Sciatic nerve (tissue), 2 donors: ENCODE measurements at regions of chr1 and their contacts with region 1.

Region 1: DNA sequence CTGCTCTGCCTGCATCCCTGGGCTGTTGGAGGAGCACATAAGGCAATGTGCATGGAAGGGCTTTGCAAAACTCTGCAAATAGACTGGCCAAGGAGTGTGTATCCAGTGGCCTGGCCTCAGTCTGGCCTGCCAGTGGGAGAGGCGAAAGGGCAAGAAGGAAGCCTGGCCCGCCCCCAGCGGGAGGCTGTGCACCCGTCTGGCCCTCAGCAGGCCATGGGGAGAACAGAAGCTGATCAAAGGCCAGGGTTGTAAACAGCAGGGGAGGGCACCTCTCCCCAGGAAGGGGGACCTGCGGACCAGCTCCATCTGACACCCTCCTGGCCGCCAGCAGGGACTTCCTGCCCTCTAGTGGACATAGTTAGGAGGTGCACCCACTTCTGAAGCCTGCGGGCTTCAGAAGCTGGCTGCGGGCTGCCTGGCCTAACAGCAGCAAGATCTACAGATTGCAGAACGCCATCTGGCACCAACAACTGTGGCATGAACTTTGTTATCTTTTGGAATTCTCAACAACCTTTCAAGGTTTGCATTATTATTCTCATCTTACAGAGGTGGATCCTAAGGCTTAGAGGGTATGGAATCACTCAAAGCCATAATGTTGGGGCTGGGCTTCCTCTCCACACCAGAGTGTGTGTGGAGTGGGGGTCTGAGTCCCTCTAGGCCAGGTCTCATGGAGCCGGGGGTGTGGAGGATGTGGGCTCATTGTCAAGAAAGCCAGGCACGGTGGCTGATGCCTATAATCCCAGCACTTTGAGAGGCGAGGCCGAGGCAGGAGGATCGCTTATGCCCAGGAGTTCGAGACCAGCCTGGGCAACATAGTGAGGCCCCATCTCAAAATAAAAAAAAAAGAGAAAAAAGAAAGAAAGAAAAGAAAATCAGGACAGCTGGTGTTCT is 18.9 kb upstream of the CDK18 start:
- DNase-seq: no peak
- ATAC-seq: peak; percentile 86

Region 2: DNA sequence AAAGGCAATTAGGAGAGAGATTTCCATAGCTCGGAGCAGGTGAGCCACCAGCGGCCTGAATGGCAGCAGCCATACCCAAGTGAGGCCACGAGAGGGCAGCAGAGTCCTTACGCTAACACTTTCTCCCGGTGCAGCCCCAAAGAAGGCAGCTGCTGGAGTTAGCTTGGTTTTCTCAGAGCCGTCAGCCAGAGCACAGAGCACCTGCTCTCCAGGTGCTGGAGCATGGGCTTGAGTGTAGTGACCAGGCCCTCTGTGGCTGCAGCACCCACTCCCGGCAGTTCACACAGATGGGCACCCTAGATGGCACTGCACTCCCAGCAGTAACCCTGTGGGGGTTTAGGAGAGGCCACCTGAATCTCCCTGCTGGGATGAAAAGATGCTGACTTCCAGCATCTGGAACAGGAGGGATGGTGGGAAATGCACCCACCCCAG is 212.0 kb before region 1 on chr1:
- intact Hi-C with region 1: loop called (anchors 10 kb)
- DNase-seq: peak; percentile 94
- ATAC-seq: peak; percentile 85

Region 3: DNA sequence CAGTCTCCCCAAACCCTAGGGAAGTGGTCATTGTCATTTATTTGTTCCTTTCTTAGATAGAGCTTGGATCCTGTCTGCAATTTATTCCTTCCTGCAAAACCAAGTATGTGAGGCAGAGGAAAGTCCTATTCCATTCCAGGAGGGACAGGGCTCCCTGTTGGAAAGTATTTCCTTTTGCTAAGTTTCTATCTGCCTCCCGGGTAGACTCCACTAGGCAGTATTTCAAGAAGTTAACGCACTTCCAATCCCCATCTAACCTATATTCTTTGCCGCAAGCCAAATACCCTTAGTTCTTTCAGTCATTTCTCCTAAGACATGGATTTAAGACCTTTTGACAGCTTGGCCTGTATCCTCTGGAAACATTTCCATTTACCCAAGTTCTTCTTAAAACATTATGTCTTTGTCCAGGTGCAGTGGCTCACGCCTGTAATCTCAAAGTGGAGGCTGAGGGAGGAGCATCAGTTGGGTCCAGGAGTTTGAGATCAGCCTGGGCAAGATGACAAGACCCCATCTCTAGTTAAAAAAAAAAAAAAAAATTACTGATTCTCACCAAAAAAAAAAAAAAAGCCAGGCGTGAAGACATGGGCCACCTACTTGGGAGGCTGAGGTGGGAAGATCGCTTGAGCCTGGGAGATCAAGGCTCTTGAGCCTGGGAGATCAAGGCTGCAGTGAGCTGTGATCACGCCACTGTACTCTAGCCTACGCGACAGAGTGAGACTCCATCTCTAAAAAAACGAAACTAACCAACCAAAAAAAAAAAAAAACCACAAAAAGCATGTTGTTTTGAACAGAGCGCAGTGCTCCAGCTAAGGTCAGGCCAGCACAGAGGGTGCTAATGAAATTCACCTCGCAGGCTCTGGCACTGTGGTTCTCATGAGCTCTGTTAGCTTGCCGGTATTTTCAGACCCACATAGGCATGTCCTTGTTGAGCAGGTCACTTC is 200.2 kb before region 1 on chr1:
- intact Hi-C with region 1: no loop called
- DNase-seq: no peak
- ATAC-seq: peak; percentile 65

Region 4: DNA sequence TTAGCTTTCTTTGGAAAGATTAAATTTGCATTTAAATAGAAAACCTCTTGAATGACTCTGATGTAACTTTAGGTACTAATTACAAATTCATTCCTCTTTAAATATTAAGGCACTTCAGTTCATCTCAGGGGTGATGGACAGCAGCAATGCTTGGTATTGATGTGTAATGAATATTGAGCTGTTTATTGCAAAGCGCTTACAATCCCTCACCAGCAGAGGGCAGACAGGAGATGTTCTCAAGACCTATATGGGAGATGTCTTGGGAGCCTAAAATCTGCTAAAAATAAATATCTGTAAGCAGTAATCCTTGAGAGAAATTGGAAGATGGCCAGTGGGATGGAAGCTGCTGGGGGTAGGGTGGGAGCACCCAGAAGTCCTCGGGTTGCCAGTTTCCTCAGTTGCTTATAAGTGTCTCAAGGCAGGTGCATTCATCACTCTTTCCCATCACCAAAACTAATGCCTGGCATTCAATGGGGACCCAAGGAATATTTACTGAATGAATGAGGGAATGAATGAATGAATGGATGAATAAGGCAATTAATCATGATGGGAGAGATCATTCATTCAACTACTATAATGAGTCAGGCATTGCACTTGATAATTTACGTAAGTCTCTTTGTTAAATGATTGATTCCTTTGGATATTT is 131.2 kb before region 1 on chr1:
- intact Hi-C with region 1: loop called (anchors 5 kb)
- DNase-seq: peak; percentile 72
- ATAC-seq: peak; percentile 69

Region 5: DNA sequence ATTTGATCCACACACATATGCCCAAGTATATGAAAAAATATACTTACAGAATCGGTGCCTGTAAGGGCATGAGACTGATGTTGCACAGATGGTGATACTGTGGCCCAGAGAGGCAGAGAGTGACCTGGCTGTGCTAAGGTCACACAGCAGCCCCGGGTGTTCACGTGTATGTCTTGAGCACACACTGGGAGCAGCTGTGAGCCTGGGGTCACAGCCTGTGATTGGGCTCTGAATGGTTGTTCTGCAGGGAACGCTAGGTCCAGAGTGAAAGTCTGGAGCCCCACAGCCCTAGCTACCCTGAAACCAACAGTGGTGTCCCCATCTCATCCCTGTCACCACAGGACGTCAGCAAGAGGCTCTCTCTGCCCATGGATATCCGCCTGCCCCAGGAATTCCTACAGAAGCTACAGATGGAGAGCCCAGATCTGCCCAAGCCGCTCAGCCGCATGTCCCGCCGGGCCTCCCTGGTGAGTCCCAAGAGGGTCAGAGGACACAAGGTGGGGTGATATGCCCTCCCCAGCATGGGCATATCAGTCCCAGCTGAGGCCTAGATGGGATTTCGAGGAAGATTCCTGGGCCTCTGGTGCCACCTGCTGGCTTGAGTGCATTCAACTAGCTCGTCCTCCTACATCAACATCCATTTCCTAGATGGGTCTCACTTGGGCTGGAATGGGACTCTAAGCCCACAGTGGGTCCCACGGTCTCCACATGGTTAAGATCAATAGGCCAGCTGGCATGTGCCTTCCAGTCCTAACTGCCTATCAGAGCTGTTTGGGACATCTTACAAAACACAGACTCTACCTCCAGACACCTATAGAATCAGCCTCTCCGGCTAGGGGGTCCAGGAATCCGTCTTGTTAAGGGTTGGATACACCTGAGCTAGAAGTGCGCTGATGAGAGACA is 38.6 kb after region 1 on chr1:
- intact Hi-C with region 1: loop called (anchors 2 kb)
- DNase-seq: peak; percentile 88
- ATAC-seq: peak; percentile 65